GM13976 (cell line): ENCODE measurements at regions of chr20 and their contacts with region 1.

Region 1: DNA sequence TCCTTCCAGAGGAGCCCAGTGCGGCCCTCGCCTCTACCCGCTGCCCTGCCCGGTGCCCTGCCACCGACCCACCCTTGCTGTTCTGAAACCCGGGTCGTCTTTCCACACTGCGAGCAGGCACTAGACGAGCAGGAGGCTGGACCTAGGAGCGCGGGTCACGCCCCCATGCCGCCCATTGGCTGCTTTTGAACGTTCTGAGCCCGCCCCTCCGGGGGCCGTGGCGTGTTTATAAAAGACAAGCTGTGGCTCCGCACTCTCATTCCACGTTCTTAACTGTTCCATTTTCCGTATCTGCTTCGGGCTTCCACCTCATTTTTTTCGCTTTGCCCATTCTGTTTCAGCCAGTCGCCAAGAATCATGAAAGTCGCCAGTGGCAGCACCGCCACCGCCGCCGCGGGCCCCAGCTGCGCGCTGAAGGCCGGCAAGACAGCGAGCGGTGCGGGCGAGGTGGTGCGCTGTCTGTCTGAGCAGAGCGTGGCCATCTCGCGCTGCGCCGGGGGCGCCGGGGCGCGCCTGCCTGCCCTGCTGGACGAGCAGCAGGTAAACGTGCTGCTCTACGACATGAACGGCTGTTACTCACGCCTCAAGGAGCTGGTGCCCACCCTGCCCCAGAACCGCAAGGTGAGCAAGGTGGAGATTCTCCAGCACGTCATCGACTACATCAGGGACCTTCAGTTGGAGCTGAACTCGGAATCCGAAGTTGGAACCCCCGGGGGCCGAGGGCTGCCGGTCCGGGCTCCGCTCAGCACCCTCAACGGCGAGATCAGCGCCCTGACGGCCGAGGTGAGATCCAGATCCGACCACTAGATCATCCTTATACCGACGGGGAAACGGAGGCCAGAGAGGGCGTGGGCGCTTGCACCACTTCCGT is at the start of gene ID1:
- DNase-seq: peak; percentile 93
- CTCF ChIP-seq: no peak

Region 2: GRCh38 chr20:31569163-31570020 is 35.9 kb before region 1 on chr20:
- in situ Hi-C with region 1: loop called (anchors 5 kb)
- DNase-seq: peak; percentile 72
- CTCF ChIP-seq: peak; percentile 79